ENCODE measurements at regions of chr2 and their contacts with region 1.

Region 1: DNA sequence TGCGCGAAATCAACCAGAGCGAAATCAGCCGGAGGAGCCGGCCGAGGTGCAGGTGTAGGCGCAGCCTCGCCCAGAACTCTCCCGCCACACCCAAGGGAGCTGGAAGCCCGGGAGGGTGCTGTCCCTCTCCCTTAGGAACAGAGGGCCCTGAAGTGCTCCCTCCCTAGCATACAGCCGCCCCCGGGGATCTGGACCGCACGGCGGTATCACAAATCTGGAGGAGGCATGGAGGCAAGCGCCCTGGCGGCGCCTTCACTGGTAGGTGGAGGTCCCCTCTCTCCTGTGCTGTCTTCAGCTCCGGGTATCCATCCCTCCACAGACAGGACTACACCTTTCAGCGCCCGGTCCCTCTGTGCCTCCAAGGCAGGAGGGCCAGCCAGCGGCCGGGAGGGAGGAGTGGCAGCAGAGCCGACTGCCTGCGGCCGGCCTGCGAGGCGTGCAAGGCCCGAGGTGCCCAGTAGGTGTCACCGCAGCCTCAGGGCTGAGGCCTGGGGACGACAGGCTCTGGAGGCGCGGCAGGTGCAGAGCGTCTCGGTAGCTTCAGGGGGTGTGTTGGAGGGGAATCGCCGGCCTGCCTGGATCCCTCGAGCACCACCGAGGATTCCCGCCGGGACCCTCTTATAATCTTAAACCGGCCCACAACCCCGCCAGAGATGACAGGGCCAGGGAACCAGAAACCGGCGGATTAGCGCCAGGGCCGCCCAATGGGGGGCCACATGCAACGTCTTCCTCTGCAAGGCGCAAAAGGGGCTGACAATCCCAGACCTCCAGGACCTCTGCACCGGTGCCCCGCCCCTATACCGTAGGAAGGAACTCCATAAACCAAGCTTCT is 2.8 kb downstream of the IHH start:
- DNase-seq: peak; percentile 75 to 84
- ATAC-seq: peak; percentile 65

Region 2: GRCh38 chr2:219142329-219142728 is 84.4 kb after region 1 on chr2:
- intact Hi-C with region 1: loop called in 1 of 2 experiments (anchors 10 kb)
- DNase-seq: no peak
- ATAC-seq: no peak

Region 3: DNA sequence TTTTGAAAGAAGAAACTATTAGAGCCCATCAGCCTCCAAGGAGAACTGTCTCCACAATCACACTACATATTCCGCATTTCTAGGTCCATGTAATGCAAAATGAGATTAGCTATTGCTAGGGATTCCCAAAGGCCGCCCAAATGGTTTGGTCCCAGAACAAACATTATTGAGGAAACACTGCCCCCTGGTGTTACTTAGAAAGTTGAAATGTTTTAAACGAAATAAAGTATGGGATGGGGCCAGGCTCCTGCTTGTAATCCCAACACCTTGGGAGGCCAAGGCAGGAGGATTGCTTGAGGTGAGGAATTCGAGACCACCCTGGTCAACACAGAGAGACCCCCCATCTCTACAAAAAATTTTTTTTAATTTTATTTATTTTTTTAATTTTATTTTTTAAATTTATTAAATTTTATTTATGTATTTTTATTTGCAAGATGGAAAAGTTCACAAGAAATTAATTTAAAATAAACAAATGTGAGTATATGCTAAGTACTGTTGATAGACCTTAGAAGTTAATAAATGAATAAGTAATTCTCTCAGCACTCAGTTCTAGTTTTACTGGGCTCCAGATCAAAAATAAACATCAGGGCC is 97.2 kb after region 1 on chr2:
- intact Hi-C with region 1: loop called in 1 of 2 experiments (anchors 10 kb)
- DNase-seq: no peak
- ATAC-seq: peak; percentile 75

Measured in left colon (tissue), 2 donors.